HCT116 (cell line): ENCODE measurements at regions of chr12 and their contacts with region 1.

Region 1: GRCh38 chr12:78120866-78121560 is 290.3 kb downstream of the NAV3 start:
- DNase-seq: peak; percentile 33
- ATAC-seq: no peak
- H3K4me3 ChIP-seq: no peak overlapping the region
- H3K27ac ChIP-seq: no peak overlapping the region
- H3K4me1 ChIP-seq: no peaks in the 10 kb centered on the region
- H3K27me3 ChIP-seq: no peaks in the 10 kb centered on the region
- CTCF ChIP-seq: peak; percentile 29 to 53 (median 53); a peak in 3 of 6 replicates
- POLR2A ChIP-seq: no peak
- RAD21 ChIP-seq: peak; percentile 66

Region 2: GRCh38 chr12:77724367-77724957 is 396.6 kb before region 1 on chr12:
- CTCF ChIA-PET with region 1: no interaction called
- POLR2A ChIA-PET with region 1: no interaction called
- RAD21 ChIA-PET with region 1: no interaction called
- intact Hi-C with region 1: loop called (anchors 10 kb)
- DNase-seq: peak; percentile 47
- ATAC-seq: peak; percentile 83
- H3K4me3 ChIP-seq: no peak overlapping the region
- H3K27ac ChIP-seq: no peak overlapping the region
- H3K4me1 ChIP-seq: no peaks in the 10 kb centered on the region
- H3K27me3 ChIP-seq: no peaks in the 10 kb centered on the region
- CTCF ChIP-seq: peak; percentile 58 to 98 (median 75)
- POLR2A ChIP-seq: no peak
- RAD21 ChIP-seq: peak; percentile 94

Region 3: GRCh38 chr12:77995436-77996167 is 125.4 kb before region 1 on chr12:
- CTCF ChIA-PET with region 1: interaction called, 24 read pairs
- POLR2A ChIA-PET with region 1: no interaction called
- RAD21 ChIA-PET with region 1: no interaction called
- intact Hi-C with region 1: loop called (anchors 1 kb)
- DNase-seq: peak; percentile 60
- ATAC-seq: peak; percentile 96
- H3K4me3 ChIP-seq: no peak overlapping the region
- H3K27ac ChIP-seq: no peak overlapping the region
- H3K4me1 ChIP-seq: peaks cover 0 to 17% of the 10 kb centered on the region in 2 experiments; a peak in 2 of 4 replicates
- H3K27me3 ChIP-seq: no peaks in the 10 kb centered on the region
- CTCF ChIP-seq: no peak
- POLR2A ChIP-seq: no peak
- RAD21 ChIP-seq: no peak

Region 4: GRCh38 chr12:78002878-78003277 is 118.1 kb before region 1 on chr12:
- CTCF ChIA-PET with region 1: interaction called, 24 read pairs
- POLR2A ChIA-PET with region 1: no interaction called
- RAD21 ChIA-PET with region 1: no interaction called
- intact Hi-C with region 1: loop called (anchors 1 kb)
- DNase-seq: no peak
- ATAC-seq: no peak
- H3K4me3 ChIP-seq: no peak overlapping the region
- H3K27ac ChIP-seq: no peak overlapping the region
- H3K4me1 ChIP-seq: no peaks in the 10 kb centered on the region
- H3K27me3 ChIP-seq: no peaks in the 10 kb centered on the region
- CTCF ChIP-seq: no peak
- POLR2A ChIP-seq: no peak
- RAD21 ChIP-seq: peak; percentile 42

Region 5: DNA sequence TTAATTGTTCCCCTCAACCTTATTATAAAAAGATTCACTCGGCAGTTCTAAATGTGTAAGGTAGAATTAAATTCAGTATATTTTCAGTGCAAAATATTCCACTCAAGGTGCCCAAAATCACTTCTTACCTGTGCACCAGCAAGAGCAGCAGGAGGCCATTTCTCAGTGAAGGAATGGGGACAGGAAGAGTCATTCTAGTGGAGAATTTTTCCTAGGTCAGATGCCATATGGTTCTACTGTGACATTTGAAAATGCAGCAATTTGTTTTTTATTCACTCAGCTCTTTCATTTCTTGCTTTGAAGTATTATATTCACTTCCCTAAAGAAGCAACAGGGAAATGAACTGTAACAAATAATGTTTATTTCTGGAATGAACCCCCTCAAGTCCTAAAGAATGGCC is 479.5 kb after region 1 on chr12:
- CTCF ChIA-PET with region 1: no interaction called
- POLR2A ChIA-PET with region 1: no interaction called
- RAD21 ChIA-PET with region 1: no interaction called
- intact Hi-C with region 1: no loop called
- DNase-seq: no peak
- ATAC-seq: no peak
- H3K4me3 ChIP-seq: no peak overlapping the region
- H3K27ac ChIP-seq: no peak overlapping the region
- H3K4me1 ChIP-seq: no peaks in the 10 kb centered on the region
- H3K27me3 ChIP-seq: no peaks in the 10 kb centered on the region
- CTCF ChIP-seq: no peak
- POLR2A ChIP-seq: no peak
- RAD21 ChIP-seq: no peak

Region 6: GRCh38 chr12:78880078-78880477 is 759.1 kb after region 1 on chr12:
- CTCF ChIA-PET with region 1: no interaction called
- POLR2A ChIA-PET with region 1: no interaction called
- RAD21 ChIA-PET with region 1: no interaction called
- intact Hi-C with region 1: no loop called
- DNase-seq: no peak
- ATAC-seq: peak; percentile 63
- H3K4me3 ChIP-seq: no peak overlapping the region
- H3K27ac ChIP-seq: peak overlapping the region; percentile 70; the same call in 1 of the 2 replicates
- H3K4me1 ChIP-seq: peaks cover 57 to 70% of the 10 kb centered on the region in 2 experiments
- H3K27me3 ChIP-seq: no peaks in the 10 kb centered on the region
- CTCF ChIP-seq: no peak
- POLR2A ChIP-seq: no peak
- RAD21 ChIP-seq: no peak